ENCODE measurements at regions of chr14 and their contacts with region 1.

Region 1: GRCh38 chr14:23269193-23269592 is 16.7 kb downstream of the HOMEZ start:
- DNase-seq: no peak
- ATAC-seq: no peak
- H3K4me3 ChIP-seq: no peak overlapping the region
- H3K27ac ChIP-seq: no peak overlapping the region
- H3K4me1 ChIP-seq: no peaks in the 10 kb centered on the region
- H3K27me3 ChIP-seq: no peaks in the 10 kb centered on the region
- CTCF ChIP-seq: no peak
- POLR2A ChIP-seq: no peak

Region 2: GRCh38 chr14:23006544-23007419 is 262.4 kb before region 1 on chr14:
- intact Hi-C with region 1: no loop called
- DNase-seq: peak; percentile 96 to 98 (median 96)
- ATAC-seq: peak; percentile 97
- H3K4me3 ChIP-seq: peak overlapping the region; percentile 29 to 33
- H3K27ac ChIP-seq: peak overlapping the region; percentile 79 to 97 (median 94)
- H3K4me1 ChIP-seq: peaks cover 18% of the 10 kb centered on the region
- H3K27me3 ChIP-seq: no peaks in the 10 kb centered on the region
- CTCF ChIP-seq: peak in 4 of 7 experiments; percentile 28 to 43 (median 31)
- POLR2A ChIP-seq: peak; percentile 72 to 94 (median 92)

Region 3: DNA sequence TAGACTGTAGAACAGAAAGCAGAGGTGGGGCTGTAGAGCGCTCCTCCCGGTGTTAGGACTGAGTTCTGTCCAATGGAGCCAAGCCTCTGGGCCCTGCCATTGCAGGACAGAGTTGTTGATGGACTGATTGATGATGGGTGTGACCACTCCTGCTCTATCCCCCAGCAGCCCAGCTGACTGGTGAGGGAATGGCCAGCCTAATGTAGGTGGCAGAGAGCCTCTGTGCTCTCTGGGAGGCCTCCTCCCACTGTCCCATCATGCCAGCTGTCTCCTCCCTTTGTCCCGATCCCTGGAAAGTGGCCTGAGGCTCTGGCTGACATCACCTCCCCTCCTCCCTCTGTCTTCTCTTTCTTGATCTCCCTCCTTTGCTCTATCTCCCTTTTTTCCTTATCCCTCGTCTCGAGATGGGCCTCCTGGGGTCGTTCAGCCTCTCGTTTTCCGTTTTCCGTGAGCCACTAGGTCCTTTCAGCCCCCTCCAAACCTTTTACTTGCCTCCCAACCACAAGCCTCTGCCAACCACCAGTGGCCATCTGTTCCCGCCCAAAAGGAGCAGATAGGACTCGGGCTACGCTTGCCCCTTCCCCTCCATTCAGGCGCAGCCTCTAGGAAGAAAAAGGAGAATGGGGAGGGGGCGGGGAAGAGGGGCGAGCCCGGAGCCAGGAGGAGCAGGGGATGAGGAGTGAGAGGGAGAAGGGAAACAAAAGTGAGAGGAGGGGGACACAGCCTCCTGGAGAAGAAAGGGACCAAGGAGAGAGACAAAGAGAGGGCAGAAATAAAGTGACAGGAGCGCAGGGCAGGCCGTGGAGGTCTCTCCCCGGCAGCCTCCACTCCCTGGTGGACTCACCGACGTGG is 95.2 kb after region 1 on chr14:
- intact Hi-C with region 1: no loop called
- DNase-seq: no peak
- ATAC-seq: no peak
- H3K4me3 ChIP-seq: no peak overlapping the region
- H3K27ac ChIP-seq: peak overlapping the region in 2 of 4 donors; percentile 14 to 45
- H3K4me1 ChIP-seq: peaks cover 11% of the 10 kb centered on the region
- H3K27me3 ChIP-seq: peaks cover 0 to 20% of the 10 kb centered on the region in 2 donors
- CTCF ChIP-seq: no peak
- POLR2A ChIP-seq: no peak

Region 4: GRCh38 chr14:23379366-23380196 is 110.4 kb after region 1 on chr14:
- intact Hi-C with region 1: loop called (anchors 10 kb)
- DNase-seq: peak; percentile 91 to 94 (median 92)
- ATAC-seq: peak; percentile 99
- H3K4me3 ChIP-seq: no peak overlapping the region
- H3K27ac ChIP-seq: no peak overlapping the region
- H3K4me1 ChIP-seq: peaks cover 6% of the 10 kb centered on the region
- H3K27me3 ChIP-seq: no peaks in the 10 kb centered on the region
- CTCF ChIP-seq: peak; percentile 84 to 99 (median 97)
- POLR2A ChIP-seq: no peak